MCF 10A (cell line): ENCODE measurements at regions of chr12 and their contacts with region 1.

Region 1: DNA sequence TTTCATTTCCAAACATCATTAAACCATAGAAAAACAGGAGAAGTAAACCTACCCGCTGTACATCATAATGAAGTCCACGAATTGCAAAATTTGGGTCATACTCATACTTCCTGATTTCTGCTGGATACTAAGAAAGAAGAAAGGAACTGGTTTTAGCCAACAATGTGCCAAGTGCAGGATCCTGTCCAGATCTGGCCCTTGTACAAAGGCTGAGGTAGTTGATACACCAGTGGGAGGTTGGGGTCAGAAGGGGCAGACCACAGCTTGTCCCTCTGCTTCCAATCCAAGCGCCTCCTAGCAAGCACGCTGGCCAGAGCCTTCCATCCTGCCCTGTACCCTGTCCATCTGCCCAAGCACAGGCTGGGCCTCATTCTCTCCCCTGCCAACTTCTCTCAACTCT is 34.2 kb downstream of the NT5DC3 start:
- DNase-seq: peak; percentile 27
- H3K4me3 Mint-ChIP-seq: no peak overlapping the region
- H3K27ac Mint-ChIP-seq: no peak overlapping the region
- H3K4me1 Mint-ChIP-seq: peaks cover 37% of the 10 kb centered on the region
- H3K27me3 Mint-ChIP-seq: no peaks in the 10 kb centered on the region
- CTCF ChIP-seq: no peak

Region 2: GRCh38 chr12:103779428-103780092 is 27.2 kb before region 1 on chr12:
- CTCF ChIA-PET with region 1: no interaction called
- POLR2A ChIA-PET with region 1: no interaction called
- intact Hi-C with region 1: no loop called
- DNase-seq: no peak
- H3K4me3 Mint-ChIP-seq: no peak overlapping the region
- H3K27ac Mint-ChIP-seq: no peak overlapping the region
- H3K4me1 Mint-ChIP-seq: no peaks in the 10 kb centered on the region
- H3K27me3 Mint-ChIP-seq: no peaks in the 10 kb centered on the region
- CTCF ChIP-seq: no peak

Region 3: GRCh38 chr12:103858953-103859601 is 52.3 kb after region 1 on chr12:
- CTCF ChIA-PET with region 1: interaction called, 3 read pairs
- POLR2A ChIA-PET with region 1: no interaction called
- intact Hi-C with region 1: loop called (anchors 2 kb)
- DNase-seq: peak; percentile 89
- H3K4me3 Mint-ChIP-seq: peak overlapping the region; percentile 35
- H3K27ac Mint-ChIP-seq: peak overlapping the region; percentile 100
- H3K4me1 Mint-ChIP-seq: peaks cover 26% of the 10 kb centered on the region
- H3K27me3 Mint-ChIP-seq: no peaks in the 10 kb centered on the region
- CTCF ChIP-seq: no peak